SK-N-SH (cell line): ENCODE measurements at regions of chr2 and their contacts with region 1.

Region 1: GRCh38 chr2:5926871-5927512 is 234.8 kb downstream of the SOX11 start:
- DNase-seq: peak; percentile 38
- H3K4me3 ChIP-seq: no peak overlapping the region
- H3K27ac ChIP-seq: no peak overlapping the region; a peak in 1 of 4 replicates
- H3K4me1 ChIP-seq: peaks cover 0 to 14% of the 10 kb centered on the region in 2 experiments; a peak in 2 of 4 replicates
- H3K27me3 ChIP-seq: no peaks in the 10 kb centered on the region
- CTCF ChIP-seq: no peak
- EP300 ChIP-seq: no peak
- RAD21 ChIP-seq: no peak

Region 2: DNA sequence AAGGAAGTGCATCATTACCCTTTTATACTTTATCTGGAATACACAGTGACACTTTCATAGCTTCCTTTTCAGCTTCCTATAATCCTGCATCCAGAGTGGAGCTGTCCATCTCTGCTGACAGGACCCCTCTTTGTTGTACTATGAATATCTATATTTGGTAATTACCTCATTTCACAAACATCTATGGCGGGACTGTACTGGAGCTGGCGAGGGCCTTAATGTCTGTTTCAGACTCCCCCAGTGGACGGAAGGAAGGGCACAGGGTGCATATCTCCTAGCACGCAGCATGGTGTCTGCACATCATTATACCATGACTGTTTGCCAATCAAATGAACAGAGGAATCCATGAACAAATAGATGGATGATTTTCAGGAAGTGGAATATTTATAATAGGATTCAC is 92.5 kb before region 1 on chr2:
- CTCF ChIA-PET with region 1: no interaction called
- POLR2A ChIA-PET with region 1: no interaction called
- DNase-seq: no peak
- H3K4me3 ChIP-seq: no peak overlapping the region
- H3K27ac ChIP-seq: no peak overlapping the region
- H3K4me1 ChIP-seq: peaks cover 0 to 2% of the 10 kb centered on the region in 2 experiments; a peak in 1 of 4 replicates
- H3K27me3 ChIP-seq: no peaks in the 10 kb centered on the region
- CTCF ChIP-seq: no peak
- EP300 ChIP-seq: no peak
- RAD21 ChIP-seq: no peak

Region 3: GRCh38 chr2:5905191-5905590 is 21.8 kb before region 1 on chr2:
- CTCF ChIA-PET with region 1: no interaction called
- POLR2A ChIA-PET with region 1: no interaction called
- DNase-seq: no peak
- H3K4me3 ChIP-seq: no peak overlapping the region
- H3K27ac ChIP-seq: no peak overlapping the region
- H3K4me1 ChIP-seq: peaks cover 0 to 4% of the 10 kb centered on the region in 2 experiments; a peak in 2 of 4 replicates
- H3K27me3 ChIP-seq: no peaks in the 10 kb centered on the region
- CTCF ChIP-seq: no peak
- EP300 ChIP-seq: no peak
- RAD21 ChIP-seq: no peak

Region 4: GRCh38 chr2:5915881-5916310 is 11.1 kb before region 1 on chr2:
- CTCF ChIA-PET with region 1: interaction called, 18 read pairs
- POLR2A ChIA-PET with region 1: no interaction called
- DNase-seq: no peak
- H3K4me3 ChIP-seq: no peak overlapping the region
- H3K27ac ChIP-seq: peak overlapping the region in 1 of 2 experiments; percentile 72; a peak in 1 of 4 replicates
- H3K4me1 ChIP-seq: peaks cover 0 to 38% of the 10 kb centered on the region in 2 experiments; a peak in 2 of 4 replicates
- H3K27me3 ChIP-seq: no peaks in the 10 kb centered on the region
- CTCF ChIP-seq: peak; percentile 36
- EP300 ChIP-seq: no peak
- RAD21 ChIP-seq: peak; percentile 45